ENCODE measurements at regions of chr16 and their contacts with region 1.

Region 1: DNA sequence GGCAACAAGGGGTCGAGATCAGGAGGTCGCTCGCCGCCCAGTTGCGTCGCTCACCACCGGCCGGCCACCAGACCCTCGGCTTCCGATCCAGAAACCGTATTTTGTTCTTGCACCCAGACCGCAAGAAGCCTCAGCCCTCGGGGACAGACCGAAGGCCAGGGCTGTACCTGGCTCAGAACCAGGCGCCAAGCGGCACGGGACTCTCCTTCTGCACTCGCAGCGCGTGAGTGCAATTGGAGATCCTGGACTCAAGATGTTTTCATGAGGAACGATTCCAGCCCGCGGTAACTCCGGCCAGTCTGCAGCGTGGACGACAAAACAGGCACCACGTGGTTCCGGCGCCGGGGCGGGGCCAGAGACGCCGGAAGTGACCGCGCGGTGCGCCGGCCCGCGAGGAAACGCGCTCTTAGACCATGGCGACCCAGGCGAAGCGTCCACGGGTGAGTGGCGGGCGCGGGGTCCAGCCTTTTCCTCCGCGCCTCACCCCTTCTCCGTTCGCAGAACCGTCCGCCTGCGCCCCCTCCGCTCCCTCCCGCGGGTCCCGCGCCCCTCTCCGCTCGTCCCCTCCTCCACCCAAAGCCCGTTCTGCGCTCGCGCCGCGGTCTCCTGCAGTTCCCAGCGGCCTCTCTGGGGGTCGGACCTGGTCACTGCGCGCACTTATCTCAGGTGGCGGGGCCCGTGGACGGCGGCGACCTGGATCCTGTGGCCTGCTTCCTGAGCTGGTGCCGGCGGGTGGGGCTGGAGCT is at the start of gene SETD6:
- DNase-seq: peak; percentile 83
- ATAC-seq: peak; percentile 84
- H3K4me3 Mint-ChIP-seq: peak within 1 kb of the TSS; percentile 86
- H3K27ac Mint-ChIP-seq: peak within 1 kb of the TSS; percentile 85
- H3K4me1 Mint-ChIP-seq: peaks cover 49% of the 10 kb centered on the region
- H3K27me3 Mint-ChIP-seq: no peaks in the 10 kb centered on the region
- total RNA-seq, gene SETD6: 12.6 to 17.8 TPM

Region 2: DNA sequence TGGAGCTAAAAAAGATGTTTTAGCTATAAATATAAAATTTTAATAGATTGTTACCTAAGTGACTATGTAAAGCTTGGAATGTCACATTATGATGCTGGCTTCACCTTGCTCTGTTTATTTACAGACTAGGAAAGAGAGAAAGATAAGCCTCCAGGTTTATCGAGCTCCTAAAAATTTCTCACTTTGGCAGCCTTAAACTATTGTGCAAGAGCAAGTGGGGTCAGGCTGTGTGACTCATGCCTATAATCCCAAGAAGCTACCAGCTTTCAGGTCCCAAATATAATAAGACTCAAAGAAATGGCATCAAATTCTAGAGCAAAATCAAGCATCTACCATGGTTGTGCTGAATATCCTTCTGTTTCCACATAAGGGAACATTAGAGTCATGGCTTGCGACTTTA is 186.2 kb before region 1 on chr16:
- CTCF ChIA-PET with region 1: no interaction called
- DNase-seq: no peak
- ATAC-seq: no peak
- H3K4me3 Mint-ChIP-seq: no peak overlapping the region
- H3K27ac Mint-ChIP-seq: no peak overlapping the region
- H3K4me1 Mint-ChIP-seq: no peaks in the 10 kb centered on the region
- H3K27me3 Mint-ChIP-seq: peaks cover 39% of the 10 kb centered on the region

Region 3: DNA sequence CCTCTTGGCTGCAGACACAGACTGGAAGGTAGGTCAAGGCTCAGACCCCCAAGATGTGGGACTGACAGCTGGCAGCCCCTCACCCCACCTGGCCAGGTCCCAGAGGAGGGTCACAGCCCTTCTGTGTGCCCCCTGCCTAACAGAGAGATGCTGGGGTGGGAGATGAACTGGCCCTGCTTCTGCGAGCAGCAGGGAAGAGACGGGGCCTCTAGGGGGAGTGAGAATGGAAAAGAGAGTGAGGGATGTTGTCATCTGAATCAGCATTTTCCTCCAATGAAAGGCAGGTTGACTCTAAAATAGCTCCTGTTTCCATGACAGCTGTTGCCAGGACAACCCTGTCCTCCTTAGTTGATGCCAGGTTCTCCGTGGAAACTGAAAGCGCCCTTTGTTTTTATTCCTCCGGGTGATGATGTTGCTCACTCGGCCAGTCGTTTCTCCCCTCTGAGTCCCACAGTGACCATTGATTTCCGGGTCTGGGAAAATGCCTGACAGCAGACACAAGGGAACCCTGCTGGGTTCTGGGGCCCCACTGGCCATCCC is 20.2 kb before region 1 on chr16:
- CTCF ChIA-PET with region 1: interaction called, 17 read pairs
- DNase-seq: peak; percentile 83
- ATAC-seq: peak; percentile 58
- H3K4me3 Mint-ChIP-seq: no peak overlapping the region
- H3K27ac Mint-ChIP-seq: no peak overlapping the region
- H3K4me1 Mint-ChIP-seq: peaks cover 16% of the 10 kb centered on the region
- H3K27me3 Mint-ChIP-seq: peaks cover 8% of the 10 kb centered on the region

Region 4: GRCh38 chr16:58563235-58563634 is 47.9 kb after region 1 on chr16:
- CTCF ChIA-PET with region 1: no interaction called
- DNase-seq: no peak
- ATAC-seq: no peak
- H3K4me3 Mint-ChIP-seq: no peak overlapping the region
- H3K27ac Mint-ChIP-seq: no peak overlapping the region
- H3K4me1 Mint-ChIP-seq: no peaks in the 10 kb centered on the region
- H3K27me3 Mint-ChIP-seq: no peaks in the 10 kb centered on the region

Region 5: GRCh38 chr16:58661199-58661830 is 146.0 kb after region 1 on chr16:
- CTCF ChIA-PET with region 1: interaction called, 10 read pairs
- DNase-seq: peak; percentile 42
- ATAC-seq: peak; percentile 80
- H3K4me3 Mint-ChIP-seq: no peak overlapping the region
- H3K27ac Mint-ChIP-seq: no peak overlapping the region
- H3K4me1 Mint-ChIP-seq: no peaks in the 10 kb centered on the region
- H3K27me3 Mint-ChIP-seq: peaks cover 3% of the 10 kb centered on the region

Region 6: DNA sequence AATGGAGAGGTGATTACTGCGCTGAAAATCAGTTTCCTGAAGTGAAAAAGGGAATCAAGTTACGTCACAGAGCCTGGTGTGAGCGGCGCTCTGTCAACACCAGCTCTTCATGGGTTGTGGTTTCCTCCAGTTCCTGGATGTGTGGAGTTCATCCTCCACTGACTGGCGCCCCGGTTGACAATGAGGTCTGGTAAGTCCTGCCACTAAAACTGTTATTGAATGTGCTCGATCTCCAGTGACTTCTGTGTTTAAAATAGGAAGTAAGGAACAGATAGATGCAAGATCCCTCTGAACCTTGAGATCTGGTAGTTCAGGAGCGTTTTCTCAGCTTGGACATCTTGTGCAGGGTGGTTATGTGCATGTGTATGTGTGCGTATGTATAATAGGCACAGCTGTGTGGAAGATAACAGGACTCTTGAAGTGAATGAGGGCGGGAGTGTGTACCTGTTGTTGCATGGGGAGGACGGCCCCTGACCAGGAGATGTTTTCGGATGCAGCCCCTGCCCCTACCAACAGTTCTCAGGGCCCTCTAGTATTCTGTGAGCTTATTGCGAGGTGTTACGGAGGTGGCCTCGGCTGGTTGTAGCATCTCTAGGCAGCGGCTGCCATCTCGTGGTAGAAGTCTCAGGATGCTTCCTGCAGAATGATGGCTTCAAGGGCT is 240.8 kb after region 1 on chr16:
- CTCF ChIA-PET with region 1: interaction called, 36 read pairs
- DNase-seq: peak; percentile 87
- ATAC-seq: peak; percentile 97
- H3K4me3 Mint-ChIP-seq: peak overlapping the region; percentile 6
- H3K27ac Mint-ChIP-seq: no peak overlapping the region
- H3K4me1 Mint-ChIP-seq: peaks cover 10% of the 10 kb centered on the region
- H3K27me3 Mint-ChIP-seq: peaks cover 8% of the 10 kb centered on the region

Measured in activated CD8-positive, alpha-beta memory T cell treated with anti-CD3 and anti-CD28 coated beads, Interleukin-2, amount 10 ng/mL, durations not matched to agents 7 days and 5 days (primary cell).